Naive thymus-derived CD4-positive, alpha-beta T cell (primary cell): ENCODE measurements at regions of chr17 and their contacts with region 1.

Region 1: DNA sequence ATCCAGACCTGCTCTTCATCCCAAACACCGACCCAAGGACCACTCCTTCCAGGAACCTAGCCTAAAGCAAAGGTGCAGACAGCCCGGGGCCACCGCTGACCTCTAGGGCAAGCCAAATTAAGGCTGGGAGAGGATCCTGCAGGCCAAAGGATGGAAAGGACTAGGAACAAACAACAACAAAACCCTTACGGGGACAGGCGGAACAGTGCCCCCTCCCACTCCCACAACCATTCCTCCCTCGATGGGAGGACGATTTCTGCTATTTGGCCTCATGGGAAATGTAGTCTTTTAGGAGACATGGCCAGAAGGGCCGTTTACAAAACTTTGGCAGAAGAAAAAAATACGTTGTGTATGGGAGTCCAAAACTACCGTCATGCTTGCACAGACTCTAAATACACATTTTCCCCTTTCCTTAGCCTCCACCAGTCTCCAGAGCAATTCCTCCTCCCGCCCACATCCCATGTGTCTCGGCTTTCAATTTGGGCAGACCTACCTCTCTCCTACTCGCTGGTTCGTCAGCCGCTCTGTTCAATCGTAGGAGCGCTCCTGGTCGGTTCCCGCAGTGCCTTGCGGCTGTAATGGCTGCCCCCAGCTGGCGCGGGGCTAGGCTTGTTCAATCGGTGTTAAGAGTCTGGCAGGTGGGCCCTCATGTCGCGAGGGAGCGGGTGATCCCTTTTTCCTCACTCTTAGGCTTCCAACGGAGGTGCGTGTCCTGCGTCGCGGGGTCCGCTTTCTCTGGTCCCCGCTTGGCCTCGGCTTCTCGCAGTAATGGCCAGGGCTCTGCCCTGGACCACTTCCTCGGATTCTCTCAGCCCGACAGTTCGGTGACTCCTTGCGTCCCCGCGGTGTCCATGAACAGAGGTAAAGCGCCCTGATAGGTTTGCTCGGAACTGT is at the start of gene ERAL1:
- DNase-seq: peak; percentile 63 to 87 (median 83)
- ATAC-seq: peak; percentile 100
- H3K4me3 ChIP-seq: peak within 1 kb of the TSS; percentile 86
- H3K4me3 Mint-ChIP-seq: peak within 1 kb of the TSS; percentile 90 to 100 (median 94)
- H3K27ac ChIP-seq: peak within 1 kb of the TSS; percentile 82
- H3K27ac Mint-ChIP-seq: peak within 1 kb of the TSS; percentile 85 to 94 (median 90)
- H3K4me1 ChIP-seq: peaks cover 7 to 12% of the 10 kb centered on the region in 2 donors
- H3K4me1 Mint-ChIP-seq: peaks cover 0 to 27% (median 11%) of the 10 kb centered on the region in 7 donors
- H3K27me3 ChIP-seq: no peaks in the 10 kb centered on the region
- H3K27me3 Mint-ChIP-seq: no peaks in the 10 kb centered on the region
- total RNA-seq, gene ERAL1: 19.8 to 50.0 (median 24.9) TPM

Region 2: DNA sequence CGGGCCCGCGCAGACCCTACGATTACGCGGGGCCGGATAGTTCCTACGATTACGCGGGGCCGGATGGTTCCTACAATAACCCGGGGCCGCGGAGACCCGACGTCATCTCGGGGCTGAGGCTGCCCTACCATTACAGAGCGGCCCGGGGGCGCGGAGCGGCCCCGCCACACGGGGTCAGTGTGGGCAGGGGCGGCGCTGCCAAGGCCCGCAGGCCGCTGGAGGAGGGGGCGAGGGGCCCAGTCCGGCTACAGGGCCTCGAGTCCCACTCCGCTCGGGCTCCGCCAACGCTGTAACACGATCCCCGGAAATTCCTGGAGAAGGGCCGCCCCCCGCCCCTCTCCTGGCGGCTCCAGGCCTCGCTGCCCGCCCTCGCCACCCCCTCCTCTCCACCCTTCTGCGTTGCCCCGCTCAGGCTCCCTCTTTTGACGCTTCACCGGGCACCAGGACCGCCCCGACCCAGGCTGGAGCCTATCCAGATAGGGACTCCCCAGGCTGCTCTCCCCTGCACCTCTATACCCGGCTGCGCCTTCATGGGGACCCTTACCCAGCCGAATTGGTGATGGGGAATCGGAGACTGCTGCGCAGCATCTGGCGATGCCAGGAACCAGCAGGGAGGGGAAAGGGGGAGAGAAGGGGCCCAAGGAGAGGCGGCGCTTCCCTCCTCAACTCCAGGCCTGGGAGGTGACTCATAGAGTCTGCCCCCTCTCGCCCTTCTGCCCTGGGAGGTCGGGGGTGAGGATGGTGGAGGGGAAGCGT is 136.9 kb before region 1 on chr17 and contains the start of gene RAB34:
- CTCF ChIA-PET with region 1: no interaction called
- POLR2A ChIA-PET with region 1: no interaction called
- intact Hi-C with region 1: loop called in 1 of 2 experiments (anchors 2 kb)
- DNase-seq: peak in 2 of 9 donors; percentile 18 to 21
- ATAC-seq: no peak
- H3K4me3 ChIP-seq: no peak within 1 kb of the TSS
- H3K4me3 Mint-ChIP-seq: peak within 1 kb of the TSS; percentile 58 to 99 (median 76)
- H3K27ac ChIP-seq: peak within 1 kb of the TSS; percentile 52
- H3K27ac Mint-ChIP-seq: peak within 1 kb of the TSS; percentile 59 to 97 (median 85)
- H3K4me1 ChIP-seq: peaks cover 26 to 30% of the 10 kb centered on the region in 2 donors
- H3K4me1 Mint-ChIP-seq: peaks cover 17 to 57% (median 35%) of the 10 kb centered on the region in 7 donors
- H3K27me3 ChIP-seq: no peaks in the 10 kb centered on the region
- H3K27me3 Mint-ChIP-seq: peaks cover 0 to 24% (median 6%) of the 10 kb centered on the region in 5 donors
- total RNA-seq, gene RAB34: 11.0 to 50.2 (median 16.4) TPM

Region 3: GRCh38 chr17:28812091-28812747 is 42.5 kb before region 1 on chr17:
- CTCF ChIA-PET with region 1: no interaction called
- POLR2A ChIA-PET with region 1: no interaction called
- intact Hi-C with region 1: loop called (anchors 1 kb)
- DNase-seq: peak; percentile 91 to 97 (median 95)
- ATAC-seq: peak; percentile 100
- H3K4me3 ChIP-seq: peak overlapping the region; percentile 85
- H3K4me3 Mint-ChIP-seq: peak overlapping the region; percentile 87 to 99 (median 92)
- H3K27ac ChIP-seq: peak overlapping the region; percentile 96
- H3K27ac Mint-ChIP-seq: peak overlapping the region; percentile 82 to 100 (median 97)
- H3K4me1 ChIP-seq: peaks cover 0 to 16% of the 10 kb centered on the region in 2 donors
- H3K4me1 Mint-ChIP-seq: peaks cover 21 to 49% (median 40%) of the 10 kb centered on the region in 7 donors
- H3K27me3 ChIP-seq: no peaks in the 10 kb centered on the region
- H3K27me3 Mint-ChIP-seq: no peaks in the 10 kb centered on the region

Region 4: DNA sequence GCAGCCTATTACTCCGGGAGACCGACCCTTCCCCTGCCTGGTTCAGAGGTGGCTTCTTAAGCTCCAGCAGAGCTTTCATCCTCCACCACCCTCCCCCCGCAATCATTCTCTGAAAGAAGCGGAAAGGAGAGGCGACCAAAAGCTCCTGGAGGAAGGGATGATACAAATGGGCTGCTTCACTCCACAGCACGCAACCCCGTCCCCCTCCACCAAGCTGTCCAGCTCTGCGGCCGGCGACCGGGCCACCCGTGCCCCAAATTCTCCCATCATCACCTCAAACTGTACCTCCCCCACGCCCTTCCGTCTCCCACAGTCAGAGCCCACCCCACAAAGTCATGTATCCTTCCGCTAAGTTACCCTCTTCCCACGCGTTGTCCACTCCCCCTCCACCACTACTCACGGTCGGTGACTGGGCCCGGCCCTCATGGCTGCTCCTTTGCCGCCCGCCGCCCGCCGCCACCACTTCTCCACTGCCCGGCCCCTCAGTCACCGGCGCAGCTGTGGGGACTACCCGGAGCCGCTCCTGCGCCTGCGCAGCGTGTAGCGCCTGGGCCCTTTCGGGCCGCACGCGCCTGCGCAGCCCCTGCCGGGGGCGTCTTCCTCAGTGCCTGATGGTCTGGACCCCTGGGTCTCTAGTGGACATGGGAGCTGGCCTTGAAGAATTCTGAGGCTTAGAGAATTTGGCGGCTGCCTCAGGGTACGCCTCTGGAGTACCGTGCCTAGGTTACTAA is 12.3 kb before region 1 on chr17 and contains the start of gene FAM222B:
- CTCF ChIA-PET with region 1: interaction called, 3 read pairs
- POLR2A ChIA-PET with region 1: interaction called, 5 read pairs
- intact Hi-C with region 1: loop called (anchors 1 kb)
- DNase-seq: peak; percentile 80 to 91 (median 86)
- ATAC-seq: peak; percentile 98
- H3K4me3 ChIP-seq: peak within 1 kb of the TSS; percentile 77
- H3K4me3 Mint-ChIP-seq: peak within 1 kb of the TSS; percentile 96 to 100 (median 98)
- H3K27ac ChIP-seq: peak within 1 kb of the TSS; percentile 78
- H3K27ac Mint-ChIP-seq: peak within 1 kb of the TSS; percentile 83 to 97 (median 92)
- H3K4me1 ChIP-seq: peaks cover 8 to 13% of the 10 kb centered on the region in 2 donors
- H3K4me1 Mint-ChIP-seq: peaks cover 6 to 31% (median 26%) of the 10 kb centered on the region in 7 donors
- H3K27me3 ChIP-seq: no peaks in the 10 kb centered on the region
- H3K27me3 Mint-ChIP-seq: no peaks in the 10 kb centered on the region
- total RNA-seq, gene FAM222B: 16.5 to 24.4 (median 22.3) TPM

Region 5: DNA sequence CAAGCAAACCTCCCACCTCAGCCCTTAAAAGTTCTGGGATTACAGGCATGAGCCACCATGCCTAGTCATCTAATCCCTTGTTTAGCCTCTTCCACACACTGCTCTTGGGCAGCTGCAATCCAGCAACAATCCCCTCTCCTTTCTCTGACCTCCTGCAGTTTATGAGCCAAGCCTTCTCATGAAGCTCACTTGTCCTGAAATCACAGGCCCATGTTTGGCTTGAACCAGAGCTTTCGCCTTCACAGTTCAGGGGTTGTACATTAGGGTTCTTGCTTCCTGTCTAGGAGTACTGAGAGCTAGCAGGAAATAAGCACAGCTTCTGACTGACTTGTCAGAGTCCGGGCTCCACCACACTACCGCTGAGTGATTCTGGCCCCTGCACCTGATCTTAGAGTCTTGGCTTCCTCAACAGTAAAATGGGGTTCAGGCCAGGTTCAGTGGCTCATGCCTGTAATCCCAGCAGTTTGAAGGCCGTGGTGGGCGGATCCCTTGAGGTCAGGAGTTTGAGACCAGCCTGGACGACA is 16.4 kb after region 1 on chr17:
- CTCF ChIA-PET with region 1: interaction called, 4 read pairs
- POLR2A ChIA-PET with region 1: interaction called, 8 read pairs
- intact Hi-C with region 1: loop called (anchors 2 kb)
- DNase-seq: peak in 7 of 9 donors; percentile 30 to 61 (median 54)
- ATAC-seq: peak; percentile 93
- H3K4me3 ChIP-seq: no peak overlapping the region
- H3K4me3 Mint-ChIP-seq: peak overlapping the region; percentile 32 to 81 (median 70)
- H3K27ac ChIP-seq: peak overlapping the region; percentile 67
- H3K27ac Mint-ChIP-seq: peak overlapping the region; percentile 90 to 100 (median 96)
- H3K4me1 ChIP-seq: peaks cover 8 to 10% of the 10 kb centered on the region in 2 donors
- H3K4me1 Mint-ChIP-seq: peaks cover 7 to 21% (median 14%) of the 10 kb centered on the region in 7 donors
- H3K27me3 ChIP-seq: no peaks in the 10 kb centered on the region
- H3K27me3 Mint-ChIP-seq: no peaks in the 10 kb centered on the region

Region 6: DNA sequence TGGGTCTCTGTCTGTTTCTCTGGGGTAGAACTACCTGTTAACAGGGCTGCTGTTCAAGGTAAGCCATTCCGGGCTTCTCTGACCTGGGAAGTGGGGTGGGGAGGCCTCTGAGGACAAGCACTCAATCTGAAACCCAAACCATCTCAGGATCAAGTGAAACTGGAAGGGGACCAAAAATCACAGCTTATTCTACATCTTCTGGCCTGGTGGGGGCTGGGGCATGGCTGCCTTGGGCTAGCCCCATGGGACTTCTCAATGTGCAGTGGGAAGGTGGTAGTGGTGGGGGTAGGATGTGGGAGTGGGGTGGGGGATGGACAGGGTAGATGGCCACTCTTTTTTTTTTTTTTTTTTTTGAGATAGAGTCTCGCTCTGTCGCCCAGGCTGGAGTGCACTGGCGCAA is 37.3 kb after region 1 on chr17:
- CTCF ChIA-PET with region 1: interaction called, 3 read pairs
- POLR2A ChIA-PET with region 1: interaction called, 19 read pairs
- intact Hi-C with region 1: loop called (anchors 1 kb)
- DNase-seq: no peak
- ATAC-seq: no peak
- H3K4me3 ChIP-seq: no peak overlapping the region
- H3K4me3 Mint-ChIP-seq: peak overlapping the region in 8 of 10 donors; percentile 25 to 62 (median 42)
- H3K27ac ChIP-seq: peak overlapping the region; percentile 78
- H3K27ac Mint-ChIP-seq: peak overlapping the region; percentile 74 to 99 (median 92)
- H3K4me1 ChIP-seq: peaks cover 17 to 34% of the 10 kb centered on the region in 2 donors
- H3K4me1 Mint-ChIP-seq: peaks cover 32 to 81% (median 62%) of the 10 kb centered on the region in 7 donors
- H3K27me3 ChIP-seq: no peaks in the 10 kb centered on the region
- H3K27me3 Mint-ChIP-seq: no peaks in the 10 kb centered on the region

Region 7: GRCh38 chr17:28896884-28897768 is 42.4 kb after region 1 on chr17 and contains the start of gene FLOT2:
- CTCF ChIA-PET with region 1: interaction called, 10 read pairs
- POLR2A ChIA-PET with region 1: interaction called, 19 read pairs
- intact Hi-C with region 1: loop called (anchors 1 kb)
- DNase-seq: peak; percentile 41 to 77 (median 76)
- ATAC-seq: peak; percentile 84
- H3K4me3 ChIP-seq: peak within 1 kb of the TSS; percentile 82
- H3K4me3 Mint-ChIP-seq: peak within 1 kb of the TSS; percentile 86 to 98 (median 96)
- H3K27ac ChIP-seq: peak within 1 kb of the TSS; percentile 96
- H3K27ac Mint-ChIP-seq: peak within 1 kb of the TSS; percentile 95 to 99 (median 97)
- H3K4me1 ChIP-seq: peaks cover 43 to 45% of the 10 kb centered on the region in 2 donors
- H3K4me1 Mint-ChIP-seq: peaks cover 32 to 80% (median 64%) of the 10 kb centered on the region in 7 donors
- H3K27me3 ChIP-seq: no peaks in the 10 kb centered on the region
- H3K27me3 Mint-ChIP-seq: no peaks in the 10 kb centered on the region
- total RNA-seq, gene FLOT2: 134 to 252 (median 191) TPM

Region 8: DNA sequence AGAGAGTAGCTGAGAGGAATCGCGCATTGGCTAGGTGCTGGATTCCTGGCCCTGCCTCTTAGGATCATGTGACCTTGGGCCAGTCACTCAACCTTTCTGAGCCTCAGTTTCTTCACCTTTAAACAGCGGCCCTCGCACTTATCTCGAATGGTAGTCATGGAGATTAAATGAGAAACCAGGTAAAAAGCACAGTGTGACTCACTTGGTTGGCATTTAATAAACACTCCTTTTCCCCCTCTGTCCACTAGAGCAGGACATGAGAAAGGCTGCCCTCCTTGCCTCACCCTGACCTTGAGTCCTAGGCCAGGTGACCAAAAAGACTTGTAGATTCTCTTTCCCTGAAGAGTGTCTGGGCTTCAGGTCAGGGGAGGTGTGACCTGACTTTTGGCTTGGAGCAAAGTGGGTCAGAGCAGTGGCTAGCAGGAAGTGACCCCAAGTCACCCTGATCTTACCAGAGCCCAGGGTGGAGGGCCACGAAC is 253.3 kb after region 1 on chr17:
- CTCF ChIA-PET with region 1: no interaction called
- POLR2A ChIA-PET with region 1: no interaction called
- intact Hi-C with region 1: no loop called
- DNase-seq: no peak
- ATAC-seq: no peak
- H3K4me3 ChIP-seq: no peak overlapping the region
- H3K4me3 Mint-ChIP-seq: no peak overlapping the region
- H3K27ac ChIP-seq: no peak overlapping the region
- H3K27ac Mint-ChIP-seq: peak overlapping the region in 2 of 9 donors; percentile 22 to 77
- H3K4me1 ChIP-seq: no peaks in the 10 kb centered on the region
- H3K4me1 Mint-ChIP-seq: peaks cover 0 to 13% (median 0%) of the 10 kb centered on the region in 7 donors
- H3K27me3 ChIP-seq: no peaks in the 10 kb centered on the region
- H3K27me3 Mint-ChIP-seq: no peaks in the 10 kb centered on the region